ENCODE measurements at regions of chr22 and their contacts with region 1.

Region 1: DNA sequence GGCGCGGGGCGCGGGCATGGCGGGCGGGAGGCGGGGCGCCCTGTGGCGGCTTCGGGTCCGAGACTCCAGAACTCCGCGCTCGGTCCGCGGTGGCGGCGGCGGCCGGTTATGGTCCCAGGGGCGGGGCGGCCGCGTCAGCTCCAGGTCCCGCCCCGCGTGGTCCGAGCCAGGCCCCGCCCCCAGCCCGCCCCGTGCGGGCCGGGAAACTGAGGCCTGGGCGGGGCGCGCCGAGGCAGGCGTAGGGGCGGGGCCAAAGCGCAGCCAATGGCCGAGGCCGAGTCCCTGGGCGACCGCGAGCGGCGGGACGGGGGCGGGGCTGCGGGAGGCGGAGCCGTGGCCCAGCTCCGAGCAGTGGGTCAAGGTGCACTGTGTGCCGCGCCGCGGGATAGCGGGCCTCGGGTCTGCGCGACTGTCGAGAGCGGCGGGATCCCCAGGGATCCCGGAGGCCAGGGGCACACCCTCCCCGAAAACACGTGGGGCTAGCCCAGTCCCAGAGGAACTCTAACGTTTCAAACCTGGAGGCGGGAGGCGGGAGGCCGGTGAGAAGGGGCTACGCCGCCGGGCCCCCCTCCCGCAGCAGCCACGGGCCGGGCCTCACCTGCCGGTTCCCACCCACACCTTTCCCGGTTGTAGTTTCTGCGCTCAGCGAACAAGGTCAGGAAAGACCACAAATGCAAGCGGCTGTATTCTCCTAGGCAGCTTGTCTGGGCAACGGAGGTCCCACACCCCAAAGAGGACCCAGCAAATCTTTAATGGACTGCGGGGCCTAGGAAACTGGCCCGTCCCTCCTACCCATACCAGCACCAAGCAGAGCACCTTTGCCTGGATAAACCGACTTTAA is at the start of gene SLC25A1:
- DNase-seq: peak; percentile 86
- H3K4me3 Mint-ChIP-seq: peak within 1 kb of the TSS; percentile 85
- H3K27ac Mint-ChIP-seq: peak within 1 kb of the TSS; percentile 68
- H3K4me1 Mint-ChIP-seq: peaks cover 24% of the 10 kb centered on the region
- H3K27me3 Mint-ChIP-seq: peaks cover 4% of the 10 kb centered on the region
- total RNA-seq, gene SLC25A1: 31.7 and 34.0 TPM in 2 replicates

Region 2: GRCh38 chr22:19085233-19085718 is 93.6 kb before region 1 on chr22:
- intact Hi-C with region 1: no loop called
- DNase-seq: no peak
- H3K4me3 Mint-ChIP-seq: no peak overlapping the region
- H3K27ac Mint-ChIP-seq: no peak overlapping the region
- H3K4me1 Mint-ChIP-seq: no peaks in the 10 kb centered on the region
- H3K27me3 Mint-ChIP-seq: no peaks in the 10 kb centered on the region

Region 3: GRCh38 chr22:19109198-19110067 is 69.4 kb before region 1 on chr22:
- intact Hi-C with region 1: loop called (anchors 5 kb)
- DNase-seq: peak; percentile 42
- H3K4me3 Mint-ChIP-seq: peak overlapping the region; percentile 66
- H3K27ac Mint-ChIP-seq: peak overlapping the region; percentile 62
- H3K4me1 Mint-ChIP-seq: peaks cover 54% of the 10 kb centered on the region
- H3K27me3 Mint-ChIP-seq: no peaks in the 10 kb centered on the region

Region 4: GRCh38 chr22:19122143-19122751 is 56.6 kb before region 1 on chr22 and contains the start of gene DGCR2:
- intact Hi-C with region 1: loop called (anchors 1 kb)
- DNase-seq: peak; percentile 91
- H3K4me3 Mint-ChIP-seq: peak within 1 kb of the TSS; percentile 89
- H3K27ac Mint-ChIP-seq: peak within 1 kb of the TSS; percentile 64
- H3K4me1 Mint-ChIP-seq: peaks cover 47% of the 10 kb centered on the region
- H3K27me3 Mint-ChIP-seq: peaks cover 1% of the 10 kb centered on the region
- total RNA-seq, gene DGCR2: 23.2 and 24.1 TPM in 2 replicates

Region 5: DNA sequence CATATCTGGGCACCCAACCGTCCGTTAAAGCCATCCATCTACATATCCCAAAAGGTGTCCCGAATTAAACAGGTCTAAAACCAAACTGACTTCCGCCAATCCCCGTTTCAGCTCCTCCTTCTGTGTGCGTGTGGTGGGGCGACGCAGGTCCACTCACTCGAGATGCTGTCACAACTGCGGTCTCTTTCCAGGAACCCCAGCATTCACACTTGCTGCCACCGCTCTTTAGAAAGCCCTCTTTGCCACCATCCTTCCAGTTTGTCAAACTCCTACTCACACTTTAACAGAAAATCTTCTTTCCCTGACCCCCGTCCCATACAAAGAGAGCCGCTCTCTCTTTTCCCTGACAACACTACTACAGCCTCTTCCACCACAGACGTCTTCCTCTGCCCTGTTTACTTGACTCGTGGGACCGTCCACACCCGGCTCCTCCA is 34.9 kb before region 1 on chr22:
- intact Hi-C with region 1: loop called (anchors 1 kb)
- DNase-seq: peak; percentile 40
- H3K4me3 Mint-ChIP-seq: peak overlapping the region; percentile 98
- H3K27ac Mint-ChIP-seq: peak overlapping the region; percentile 97
- H3K4me1 Mint-ChIP-seq: peaks cover 23% of the 10 kb centered on the region
- H3K27me3 Mint-ChIP-seq: peaks cover 22% of the 10 kb centered on the region

Region 6: DNA sequence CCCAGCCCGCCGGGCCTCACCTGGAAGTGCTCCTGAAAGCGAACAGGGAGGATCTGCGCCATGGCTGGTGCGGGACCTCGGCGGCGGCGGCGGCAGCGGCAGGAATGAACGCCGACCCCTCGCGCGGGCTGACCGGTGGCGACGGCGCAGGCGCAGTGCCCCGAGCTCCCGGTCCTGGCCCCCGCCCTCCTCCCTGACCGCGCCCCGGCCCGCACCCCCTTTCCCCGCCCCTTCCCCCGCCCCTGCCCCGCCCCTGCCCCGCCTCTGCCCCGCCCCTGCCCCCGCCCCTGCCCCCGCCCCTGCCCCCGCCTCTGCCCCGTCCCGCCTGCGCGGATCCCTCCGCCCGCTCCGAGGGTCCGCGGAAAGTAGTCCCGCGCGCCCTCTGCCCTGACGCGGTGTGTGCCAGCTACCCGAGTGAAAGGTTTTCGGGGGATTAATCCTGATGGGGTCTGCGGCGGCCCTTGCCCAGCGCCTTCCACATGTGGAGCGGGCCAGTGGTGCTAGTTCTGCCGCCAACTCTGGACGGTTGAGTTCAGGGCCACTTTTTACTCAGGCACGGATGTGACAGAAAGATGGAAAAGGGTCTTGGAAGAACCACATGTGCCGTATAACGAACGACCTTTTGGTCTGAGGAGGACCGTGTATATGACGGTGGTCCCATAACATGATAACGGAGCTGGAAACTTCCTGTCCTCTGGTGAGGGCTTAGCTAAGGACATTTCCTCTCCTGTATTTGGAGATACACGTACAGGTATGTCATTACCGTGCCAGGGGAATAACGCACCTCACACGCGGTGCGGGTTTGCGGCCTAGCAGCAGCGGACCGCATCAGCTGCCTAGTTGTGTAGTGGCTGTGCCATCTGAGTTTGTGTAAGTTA is 112.9 kb after region 1 on chr22 and contains the start of gene CLTCL1:
- intact Hi-C with region 1: loop called (anchors 1 kb)
- DNase-seq: peak; percentile 66
- H3K4me3 Mint-ChIP-seq: peak within 1 kb of the TSS; percentile 91
- H3K27ac Mint-ChIP-seq: peak within 1 kb of the TSS; percentile 88
- H3K4me1 Mint-ChIP-seq: peaks cover 24% of the 10 kb centered on the region
- H3K27me3 Mint-ChIP-seq: peaks cover 41% of the 10 kb centered on the region
- total RNA-seq, gene CLTCL1: 0.64 and 0.73 TPM in 2 replicates

Region 7: GRCh38 chr22:19447388-19448075 is 268.7 kb after region 1 on chr22 and contains the start of gene C22orf39:
- intact Hi-C with region 1: loop called (anchors 5 kb)
- DNase-seq: peak; percentile 88
- H3K4me3 Mint-ChIP-seq: peak within 1 kb of the TSS; percentile 95
- H3K27ac Mint-ChIP-seq: peak within 1 kb of the TSS; percentile 94
- H3K4me1 Mint-ChIP-seq: peaks cover 46% of the 10 kb centered on the region
- H3K27me3 Mint-ChIP-seq: no peaks in the 10 kb centered on the region
- total RNA-seq, gene C22orf39: 22.8 and 26.8 TPM in 2 replicates

Region 8: GRCh38 chr22:19629720-19630419 is 451.0 kb after region 1 on chr22:
- intact Hi-C with region 1: loop called (anchors 1 kb)
- DNase-seq: peak; percentile 77
- H3K4me3 Mint-ChIP-seq: no peak overlapping the region
- H3K27ac Mint-ChIP-seq: no peak overlapping the region
- H3K4me1 Mint-ChIP-seq: peaks cover 5% of the 10 kb centered on the region
- H3K27me3 Mint-ChIP-seq: peaks cover 8% of the 10 kb centered on the region